ENCODE measurements at regions of chr5 and their contacts with region 1.

Region 1: DNA sequence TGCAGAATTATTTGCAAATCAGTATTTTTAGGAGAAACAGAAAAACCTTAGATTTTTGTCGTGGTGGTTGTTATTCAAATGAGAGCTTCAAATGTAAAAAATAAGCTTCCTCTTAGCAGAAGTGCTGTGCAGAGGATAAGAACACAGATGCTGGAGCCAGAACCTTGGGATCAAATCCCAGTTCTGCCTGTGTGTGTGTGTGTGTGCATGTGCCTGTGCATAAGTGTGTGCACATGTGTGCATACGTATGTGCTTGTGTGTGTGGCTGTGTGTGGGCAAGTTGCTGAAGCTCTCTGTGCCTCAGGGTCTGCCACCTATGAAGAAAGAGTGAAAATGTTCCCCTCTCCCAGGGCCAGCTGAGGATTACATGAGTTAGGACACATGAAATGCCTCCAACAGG is 8.6 kb downstream of the DAP start:
- DNase-seq: no peak
- H3K4me3 ChIP-seq: no peak overlapping the region
- H3K27ac ChIP-seq: no peak overlapping the region
- H3K4me1 ChIP-seq: peaks cover 0 to 18% (median under 1%) of the 10 kb centered on the region in 4 experiments
- H3K27me3 ChIP-seq: no peaks in the 10 kb centered on the region

Region 2: DNA sequence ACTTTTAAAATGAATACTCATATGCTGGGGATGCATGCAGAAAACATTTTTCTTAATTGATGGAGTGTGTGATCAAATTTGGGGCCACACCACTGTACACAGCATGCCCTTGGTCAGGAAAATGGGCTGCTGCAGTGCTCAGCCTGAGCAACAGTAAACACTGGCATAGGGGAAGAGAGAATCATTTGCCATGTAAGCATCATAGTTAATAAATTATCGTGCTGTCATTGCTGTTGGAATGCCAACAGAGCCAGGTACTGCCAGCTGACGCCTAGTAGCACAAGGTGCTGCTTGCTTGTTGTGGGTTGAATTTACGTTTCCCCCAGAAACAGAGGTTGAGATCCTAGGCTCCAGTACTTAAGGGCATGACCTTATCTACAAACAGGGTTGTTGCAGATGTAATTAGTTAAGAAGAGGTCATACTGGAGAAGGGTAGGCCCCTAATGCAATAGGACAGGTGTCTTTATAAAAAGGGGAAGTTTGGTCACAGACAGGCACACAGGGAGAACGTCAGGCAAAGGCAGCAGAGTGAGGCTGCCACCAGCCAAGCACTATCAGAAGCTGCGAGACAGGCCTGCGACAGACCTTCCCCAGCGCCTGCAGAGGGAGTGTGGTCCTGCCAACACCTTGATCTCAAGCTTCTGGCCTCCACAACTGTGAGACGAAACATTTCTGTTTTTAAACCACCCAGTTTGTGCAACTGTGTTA is 16.7 kb before region 1 on chr5:
- CTCF ChIA-PET with region 1: interaction called, 32 read pairs
- POLR2A ChIA-PET with region 1: interaction called, 4 read pairs
- DNase-seq: peak; percentile 56 to 88 (median 79)
- H3K4me3 ChIP-seq: peak overlapping the region in 1 of 7 experiments; percentile 4
- H3K27ac ChIP-seq: no peak overlapping the region
- H3K4me1 ChIP-seq: peaks cover 10 to 44% (median 32%) of the 10 kb centered on the region in 4 experiments
- H3K27me3 ChIP-seq: no peaks in the 10 kb centered on the region

Region 3: GRCh38 chr5:10797261-10797660 is 44.8 kb after region 1 on chr5:
- CTCF ChIA-PET with region 1: no interaction called
- POLR2A ChIA-PET with region 1: no interaction called
- DNase-seq: peak; percentile 27 to 86 (median 75)
- H3K4me3 ChIP-seq: peak overlapping the region in 1 of 7 experiments; percentile 7
- H3K27ac ChIP-seq: no peak overlapping the region
- H3K4me1 ChIP-seq: peaks cover 7 to 35% (median 13%) of the 10 kb centered on the region in 4 experiments
- H3K27me3 ChIP-seq: no peaks in the 10 kb centered on the region

Region 4: GRCh38 chr5:10808347-10809226 is 56.1 kb after region 1 on chr5:
- CTCF ChIA-PET with region 1: no interaction called
- POLR2A ChIA-PET with region 1: no interaction called
- DNase-seq: peak in 2 of 3 donors; percentile 13 to 17
- H3K4me3 ChIP-seq: no peak overlapping the region
- H3K27ac ChIP-seq: no peak overlapping the region
- H3K4me1 ChIP-seq: no peaks in the 10 kb centered on the region
- H3K27me3 ChIP-seq: no peaks in the 10 kb centered on the region

Region 5: GRCh38 chr5:10964806-10965205 is 212.4 kb after region 1 on chr5:
- CTCF ChIA-PET with region 1: no interaction called
- POLR2A ChIA-PET with region 1: no interaction called
- DNase-seq: no peak
- H3K4me3 ChIP-seq: no peak overlapping the region
- H3K27ac ChIP-seq: no peak overlapping the region
- H3K4me1 ChIP-seq: peaks cover 0 to 9% (median 4%) of the 10 kb centered on the region in 4 experiments
- H3K27me3 ChIP-seq: no peaks in the 10 kb centered on the region